ENCODE measurements at regions of chr6 and their contacts with region 1.

Region 1: GRCh38 chr6:2988426-2989331 is 11.0 kb upstream of the NQO2 start:
- DNase-seq: peak; percentile 58 to 93
- ATAC-seq: peak; percentile 91
- H3K4me3 ChIP-seq: peak overlapping the region; percentile 66
- H3K27ac ChIP-seq: peak overlapping the region; percentile 96 to 99
- H3K4me1 ChIP-seq: peaks cover 33% of the 10 kb centered on the region
- CTCF ChIP-seq: peak; percentile 67
- EP300 ChIP-seq: no peak
- POLR2A ChIP-seq: peak; percentile 64
- RAD21 ChIP-seq: peak; percentile 66 to 82; a peak in 4 of 5 replicates

Region 2: DNA sequence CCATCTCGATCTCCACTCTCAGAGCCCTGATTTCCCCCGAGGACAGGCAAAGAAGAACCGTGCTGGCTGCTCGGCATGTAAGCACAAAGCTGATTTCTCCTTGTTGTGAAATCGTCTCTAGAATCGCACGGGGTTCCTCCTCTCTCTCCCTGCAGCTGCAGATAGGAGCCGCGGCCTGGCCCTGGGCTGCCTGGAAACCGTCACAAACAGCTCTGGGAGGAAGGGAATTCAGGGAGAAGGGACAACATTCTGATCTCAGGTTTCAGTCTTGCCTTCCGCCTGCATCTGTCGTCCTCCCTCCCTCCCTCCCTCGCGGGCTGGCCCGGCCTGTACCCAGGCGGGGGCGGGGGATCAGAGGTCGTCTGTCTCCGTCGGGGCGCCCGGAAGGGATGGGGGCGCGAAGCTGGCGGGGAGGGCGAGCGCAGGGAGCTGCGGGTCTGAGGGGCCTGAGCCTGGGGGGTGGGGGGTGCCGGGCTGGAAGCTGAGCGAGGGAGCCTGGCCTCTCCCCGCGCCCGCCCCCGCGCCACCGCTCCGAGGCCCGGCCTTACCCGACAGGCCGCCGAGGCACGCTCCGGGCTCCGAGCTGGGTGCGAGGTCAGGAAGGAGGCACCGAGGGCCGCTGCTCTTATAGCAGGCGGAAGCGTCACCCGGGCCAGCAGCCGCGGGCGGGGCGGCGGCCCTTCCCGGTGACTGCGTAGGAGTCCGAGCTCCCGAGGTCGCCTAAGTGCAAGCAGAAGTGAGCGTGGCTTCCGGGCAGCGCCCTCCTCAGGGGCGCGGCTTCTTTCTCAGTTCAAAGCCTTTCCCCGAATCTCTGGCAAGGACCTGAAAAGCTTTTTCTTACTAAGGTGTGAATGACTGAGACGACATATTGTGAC is 147.2 kb before region 1 on chr6 and contains the start of gene SERPINB1:
- CTCF ChIA-PET with region 1: interaction called, 37 read pairs
- POLR2A ChIA-PET with region 1: interaction called, 25 read pairs
- DNase-seq: peak; percentile 47 to 90
- ATAC-seq: peak; percentile 74 to 81
- H3K4me3 ChIP-seq: peak within 1 kb of the TSS; percentile 71
- H3K27ac ChIP-seq: peak within 1 kb of the TSS; percentile 94 to 99
- H3K4me1 ChIP-seq: peaks cover 41% of the 10 kb centered on the region
- CTCF ChIP-seq: no peak
- EP300 ChIP-seq: no peak
- POLR2A ChIP-seq: peak; percentile 75
- RAD21 ChIP-seq: 0 out of 5 replicates have a peak, but pooled peaks of 1 of the 2 experiments have one; percentile 9
- polyA plus RNA-seq, gene SERPINB1: 98.6 and 135 TPM in 2 replicates

Region 3: GRCh38 chr6:2931970-2932748 is 56.5 kb before region 1 on chr6:
- CTCF ChIA-PET with region 1: interaction called, 15 read pairs
- POLR2A ChIA-PET with region 1: interaction called, 5 read pairs
- DNase-seq: peak; percentile 78 to 83
- ATAC-seq: peak; percentile 99
- H3K4me3 ChIP-seq: no peak overlapping the region
- H3K27ac ChIP-seq: peak overlapping the region; percentile 25 to 38; a peak in 3 of 6 replicates
- H3K4me1 ChIP-seq: peaks cover 7% of the 10 kb centered on the region; the same call in 2 of the 3 replicates
- CTCF ChIP-seq: peak; percentile 89
- EP300 ChIP-seq: no peak
- POLR2A ChIP-seq: no peak
- RAD21 ChIP-seq: peak; percentile 85 to 88

Region 4: GRCh38 chr6:2958331-2959175 is 30.1 kb before region 1 on chr6:
- CTCF ChIA-PET with region 1: interaction called, 142 read pairs
- POLR2A ChIA-PET with region 1: no interaction called
- DNase-seq: no peak
- ATAC-seq: no peak
- H3K4me3 ChIP-seq: no peak overlapping the region
- H3K27ac ChIP-seq: peak overlapping the region in 1 of 2 experiments; percentile 31; a peak in 1 of 6 replicates
- H3K4me1 ChIP-seq: peaks cover 36% of the 10 kb centered on the region
- CTCF ChIP-seq: no peak
- EP300 ChIP-seq: no peak
- POLR2A ChIP-seq: no peak
- RAD21 ChIP-seq: no peak

Region 5: GRCh38 chr6:2976571-2977085 is 12.1 kb before region 1 on chr6:
- CTCF ChIA-PET with region 1: interaction called, 21 read pairs
- POLR2A ChIA-PET with region 1: interaction called, 35 read pairs
- DNase-seq: peak in 1 of 2 experiments; percentile 34
- ATAC-seq: peak; percentile 56 to 60; a peak in 5 of 6 replicates
- H3K4me3 ChIP-seq: no peak overlapping the region
- H3K27ac ChIP-seq: peak overlapping the region; percentile 73 to 86
- H3K4me1 ChIP-seq: peaks cover 56% of the 10 kb centered on the region
- CTCF ChIP-seq: no peak
- EP300 ChIP-seq: no peak
- POLR2A ChIP-seq: no peak
- RAD21 ChIP-seq: no peak

Region 6: DNA sequence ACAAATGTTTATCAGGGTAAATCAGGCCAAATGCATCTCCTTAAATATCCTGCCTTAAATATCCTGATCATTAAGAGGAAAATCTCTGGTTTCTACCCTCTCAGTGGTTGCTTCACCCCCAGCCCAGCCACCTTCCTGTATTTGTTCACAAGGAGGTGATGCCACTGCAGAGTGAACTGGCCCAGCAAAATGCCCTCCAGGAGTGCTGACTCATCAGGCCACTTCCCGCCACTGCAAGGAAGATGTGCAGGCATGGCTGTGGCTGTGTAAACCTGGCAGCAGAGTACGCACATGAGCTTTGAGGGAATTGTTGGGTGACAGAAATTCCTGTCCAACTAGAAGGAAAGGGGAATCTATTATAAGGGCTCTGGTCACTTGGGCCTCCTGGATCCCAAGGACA is 24.8 kb after region 1 on chr6:
- CTCF ChIA-PET with region 1: no interaction called
- POLR2A ChIA-PET with region 1: no interaction called
- DNase-seq: peak; percentile 40 to 66
- ATAC-seq: peak; percentile 72 to 78
- H3K4me3 ChIP-seq: no peak overlapping the region
- H3K27ac ChIP-seq: peak overlapping the region; percentile 62 to 85; a peak in 5 of 6 replicates
- H3K4me1 ChIP-seq: peaks cover 15% of the 10 kb centered on the region
- CTCF ChIP-seq: no peak
- EP300 ChIP-seq: no peak
- POLR2A ChIP-seq: no peak
- RAD21 ChIP-seq: no peak

Region 7: DNA sequence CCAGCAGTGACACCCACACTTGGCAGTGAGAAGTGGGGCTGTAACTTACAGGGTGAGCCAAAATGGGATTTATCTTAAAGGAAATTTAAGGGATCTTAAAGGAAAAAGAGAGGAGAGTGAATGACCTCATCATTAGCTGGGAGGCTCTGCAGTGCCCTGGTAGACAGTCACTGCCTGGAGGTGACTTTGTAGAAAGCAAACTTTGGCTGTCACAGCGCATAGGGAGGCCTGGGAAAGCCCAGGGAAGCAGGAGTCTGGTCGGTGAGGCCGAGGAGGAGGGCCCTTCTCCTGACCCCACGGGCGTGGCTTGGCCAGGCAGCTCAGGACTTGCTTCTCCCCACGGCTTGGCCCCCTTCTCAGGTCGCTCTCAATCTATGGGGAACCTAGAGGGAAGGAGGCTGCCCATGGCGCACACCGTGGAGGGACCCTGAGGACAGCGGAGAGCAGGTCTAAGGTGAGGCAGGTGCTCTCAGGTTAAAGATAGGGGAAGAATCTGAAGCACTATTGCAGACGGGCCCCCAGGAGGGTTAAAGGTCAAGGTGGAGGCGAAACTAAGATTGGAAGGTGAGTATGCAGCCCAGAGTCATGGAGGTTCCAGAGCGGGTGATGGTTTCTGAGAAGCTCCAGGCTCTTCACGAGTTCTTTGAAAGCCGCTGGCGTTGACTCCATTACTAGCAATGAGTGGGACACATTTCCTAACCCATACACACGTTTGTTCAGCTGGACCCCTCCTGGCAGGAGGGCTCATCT is 64.0 kb after region 1 on chr6:
- CTCF ChIA-PET with region 1: interaction called, 15 read pairs
- POLR2A ChIA-PET with region 1: interaction called, 10 read pairs
- DNase-seq: no peak
- ATAC-seq: no peak
- H3K4me3 ChIP-seq: peak overlapping the region; percentile 50
- H3K27ac ChIP-seq: peak overlapping the region; percentile 70 to 88; a peak in 4 of 6 replicates
- H3K4me1 ChIP-seq: peaks cover 12% of the 10 kb centered on the region
- CTCF ChIP-seq: no peak
- EP300 ChIP-seq: no peak
- POLR2A ChIP-seq: no peak
- RAD21 ChIP-seq: no peak

Measured in A549 (cell line).